ENCODE measurements at regions of chr5 and their contacts with region 1.

Region 1: GRCh38 chr5:54310433-54311175 is at the start of gene ARL15:
- DNase-seq: peak; percentile 97
- H3K4me3 Mint-ChIP-seq: peak within 1 kb of the TSS; percentile 77
- H3K27ac Mint-ChIP-seq: peak within 1 kb of the TSS; percentile 97
- H3K4me1 Mint-ChIP-seq: peaks cover 13% of the 10 kb centered on the region
- H3K27me3 Mint-ChIP-seq: no peaks in the 10 kb centered on the region
- CTCF ChIP-seq: no peak
- total RNA-seq, gene ARL15: 11.8 and 15.1 TPM in 2 replicates

Region 2: GRCh38 chr5:54195701-54196100 is 114.9 kb before region 1 on chr5:
- CTCF ChIA-PET with region 1: no interaction called
- intact Hi-C with region 1: no loop called
- DNase-seq: no peak
- H3K4me3 Mint-ChIP-seq: no peak overlapping the region
- H3K27ac Mint-ChIP-seq: no peak overlapping the region
- H3K4me1 Mint-ChIP-seq: no peaks in the 10 kb centered on the region
- H3K27me3 Mint-ChIP-seq: no peaks in the 10 kb centered on the region
- CTCF ChIP-seq: no peak

Region 3: GRCh38 chr5:54254482-54255198 is 56.0 kb before region 1 on chr5:
- CTCF ChIA-PET with region 1: no interaction called
- intact Hi-C with region 1: loop called (anchors 5 kb)
- DNase-seq: no peak
- H3K4me3 Mint-ChIP-seq: no peak overlapping the region
- H3K27ac Mint-ChIP-seq: no peak overlapping the region
- H3K4me1 Mint-ChIP-seq: no peaks in the 10 kb centered on the region
- H3K27me3 Mint-ChIP-seq: no peaks in the 10 kb centered on the region
- CTCF ChIP-seq: no peak

Region 4: DNA sequence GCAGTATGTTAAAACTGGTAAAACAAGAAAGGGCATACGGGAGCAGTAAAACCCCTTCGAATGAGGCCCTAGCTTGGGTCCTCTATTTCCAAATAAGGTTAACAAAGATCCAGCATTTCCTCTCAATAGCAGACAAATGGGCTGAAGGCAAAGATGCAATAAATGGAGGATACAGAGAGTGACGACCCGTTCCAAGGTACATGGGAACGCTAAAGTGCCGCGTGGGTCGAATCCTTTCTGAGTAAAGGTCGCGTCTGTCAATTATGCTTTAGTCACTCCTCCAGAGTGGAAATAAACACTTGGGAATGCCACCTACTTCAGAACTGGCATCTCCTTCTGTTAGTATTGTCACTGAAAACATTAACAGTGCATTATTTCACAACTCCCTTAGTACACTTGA is 24.9 kb before region 1 on chr5:
- CTCF ChIA-PET with region 1: no interaction called
- intact Hi-C with region 1: no loop called
- DNase-seq: no peak
- H3K4me3 Mint-ChIP-seq: no peak overlapping the region
- H3K27ac Mint-ChIP-seq: no peak overlapping the region
- H3K4me1 Mint-ChIP-seq: no peaks in the 10 kb centered on the region
- H3K27me3 Mint-ChIP-seq: no peaks in the 10 kb centered on the region
- CTCF ChIP-seq: no peak

Region 5: DNA sequence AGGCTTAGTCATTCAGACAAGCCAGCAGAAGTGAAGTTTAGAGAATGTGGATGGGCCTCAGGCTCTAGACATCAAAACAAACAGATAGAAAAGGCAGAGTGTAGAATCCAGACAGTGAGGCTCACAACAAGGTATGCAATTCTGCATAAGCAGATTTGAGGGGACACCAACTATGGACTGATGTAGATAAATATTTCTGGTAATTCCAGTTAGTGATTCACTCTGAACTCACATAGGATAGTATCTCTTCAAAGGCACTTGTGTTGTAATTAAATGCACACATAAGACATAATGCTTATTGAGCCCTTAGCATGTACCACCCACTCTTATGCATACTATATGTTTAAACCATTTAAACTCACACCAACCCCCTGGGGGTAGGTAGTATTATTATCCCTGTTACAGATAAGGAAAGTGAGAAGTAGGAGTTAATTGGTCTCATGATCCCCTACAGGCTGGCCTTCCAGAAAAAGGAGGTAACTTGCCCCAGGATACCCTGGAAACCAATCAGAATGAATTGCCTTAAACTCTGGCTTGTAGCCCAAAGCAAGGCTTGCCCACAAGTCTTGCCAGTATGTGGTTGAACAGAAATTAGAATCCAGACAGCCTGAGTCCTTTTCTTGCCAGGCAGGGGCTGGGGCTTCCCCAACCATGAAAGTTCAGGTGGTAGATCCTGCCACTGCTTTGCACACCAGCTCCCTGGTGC is 105.4 kb after region 1 on chr5:
- CTCF ChIA-PET with region 1: interaction called, 4 read pairs
- intact Hi-C with region 1: loop called (anchors 5 kb)
- DNase-seq: no peak
- H3K4me3 Mint-ChIP-seq: no peak overlapping the region
- H3K27ac Mint-ChIP-seq: no peak overlapping the region
- H3K4me1 Mint-ChIP-seq: no peaks in the 10 kb centered on the region
- H3K27me3 Mint-ChIP-seq: peaks cover 42% of the 10 kb centered on the region
- CTCF ChIP-seq: no peak

Region 6: DNA sequence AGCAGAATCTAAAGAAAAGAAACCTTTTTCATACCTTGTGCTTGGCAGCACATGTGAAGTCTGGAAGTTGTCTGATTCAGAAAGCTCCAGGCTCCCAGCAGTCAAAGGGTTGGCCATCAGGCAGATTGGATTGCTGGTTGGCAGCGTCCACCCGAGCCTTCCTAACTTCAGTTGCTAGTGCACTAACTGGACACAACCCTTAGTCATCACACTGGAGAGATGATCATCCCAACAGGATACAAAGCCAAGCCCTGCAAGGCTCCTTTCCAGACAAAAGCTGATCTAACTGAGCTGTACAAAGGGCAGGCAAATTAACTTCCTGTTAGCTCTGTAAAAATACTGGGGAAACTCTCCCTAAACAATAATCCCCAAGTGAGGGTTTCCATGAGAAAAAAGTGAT is 392.5 kb after region 1 on chr5:
- CTCF ChIA-PET with region 1: no interaction called
- intact Hi-C with region 1: no loop called
- DNase-seq: peak; percentile 10
- H3K4me3 Mint-ChIP-seq: no peak overlapping the region
- H3K27ac Mint-ChIP-seq: peak overlapping the region; percentile 39
- H3K4me1 Mint-ChIP-seq: peaks cover 34% of the 10 kb centered on the region
- H3K27me3 Mint-ChIP-seq: no peaks in the 10 kb centered on the region
- CTCF ChIP-seq: no peak

Region 7: DNA sequence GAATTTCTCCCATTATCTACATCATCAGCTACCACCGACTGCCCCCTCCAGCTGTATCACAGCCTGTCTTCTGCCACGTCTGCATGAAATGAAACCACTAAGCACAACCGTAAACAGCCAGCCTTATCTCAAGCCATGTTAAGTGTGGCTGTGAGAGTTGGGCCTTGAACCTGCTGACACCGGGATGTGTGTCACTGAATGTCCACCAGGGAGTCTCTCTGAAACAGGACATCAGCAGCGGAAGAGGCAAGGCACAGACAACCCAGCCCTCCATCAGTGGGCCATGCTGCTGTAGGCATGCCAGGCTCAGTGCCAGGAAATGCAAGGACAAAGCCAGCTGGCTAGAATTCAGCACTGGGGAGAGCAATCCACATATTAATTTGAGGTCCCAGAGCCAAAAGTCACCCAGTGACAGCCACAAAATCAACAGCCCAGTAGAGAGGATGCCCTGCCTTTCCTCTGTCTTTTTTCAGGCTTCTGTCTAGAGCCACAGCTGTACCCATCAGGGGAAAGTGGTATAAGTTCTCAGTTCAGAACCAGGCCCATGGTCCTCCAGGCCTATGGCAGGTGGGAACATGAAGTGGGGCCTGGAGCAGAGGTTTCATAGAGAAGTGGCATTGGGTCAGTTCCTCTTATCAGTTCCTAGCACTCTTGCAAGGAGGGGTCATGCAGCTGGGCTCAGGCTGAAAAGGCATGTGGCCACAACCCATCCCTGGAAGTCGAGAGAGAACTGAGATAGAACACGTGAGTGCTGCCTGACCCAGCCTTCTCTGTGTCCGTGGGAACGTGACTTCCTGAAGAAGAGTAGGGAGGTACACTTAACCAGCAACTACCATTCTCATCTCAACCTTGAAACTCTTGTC is 475.4 kb after region 1 on chr5:
- CTCF ChIA-PET with region 1: no interaction called
- intact Hi-C with region 1: no loop called
- DNase-seq: no peak
- H3K4me3 Mint-ChIP-seq: no peak overlapping the region
- H3K27ac Mint-ChIP-seq: no peak overlapping the region
- H3K4me1 Mint-ChIP-seq: peaks cover 8% of the 10 kb centered on the region
- H3K27me3 Mint-ChIP-seq: no peaks in the 10 kb centered on the region
- CTCF ChIP-seq: no peak